Esophagus muscularis mucosa (tissue), 4 donors: ENCODE measurements at regions of chr17 and their contacts with region 1.

Region 1: GRCh38 chr17:64975329-64976087 is 56.2 kb upstream of the LRRC37A3 start:
- DNase-seq: peak; percentile 99
- H3K4me3 ChIP-seq: peak overlapping the region; percentile 64 to 94 (median 87)
- H3K27ac ChIP-seq: peak overlapping the region; percentile 91 to 99 (median 98)
- H3K4me1 ChIP-seq: peaks cover 23 to 28% (median 27%) of the 10 kb centered on the region in 4 donors
- H3K27me3 ChIP-seq: peaks cover 0 to 4% (median 0%) of the 10 kb centered on the region in 4 donors
- CTCF ChIP-seq: peak in 1 of 3 experiments; percentile 4
- EP300 ChIP-seq: no peak
- POLR2A ChIP-seq: peak; percentile 70

Region 2: GRCh38 chr17:65017207-65017774 is 41.8 kb after region 1 on chr17:
- intact Hi-C with region 1: loop called (anchors 5 kb)
- DNase-seq: no peak
- H3K4me3 ChIP-seq: peak overlapping the region in 1 of 4 donors; percentile 7
- H3K27ac ChIP-seq: peak overlapping the region; percentile 71 to 75 (median 73)
- H3K4me1 ChIP-seq: peaks cover 31 to 96% (median 92%) of the 10 kb centered on the region in 4 donors
- H3K27me3 ChIP-seq: no peaks in the 10 kb centered on the region
- CTCF ChIP-seq: no peak
- EP300 ChIP-seq: no peak
- POLR2A ChIP-seq: no peak

Region 3: DNA sequence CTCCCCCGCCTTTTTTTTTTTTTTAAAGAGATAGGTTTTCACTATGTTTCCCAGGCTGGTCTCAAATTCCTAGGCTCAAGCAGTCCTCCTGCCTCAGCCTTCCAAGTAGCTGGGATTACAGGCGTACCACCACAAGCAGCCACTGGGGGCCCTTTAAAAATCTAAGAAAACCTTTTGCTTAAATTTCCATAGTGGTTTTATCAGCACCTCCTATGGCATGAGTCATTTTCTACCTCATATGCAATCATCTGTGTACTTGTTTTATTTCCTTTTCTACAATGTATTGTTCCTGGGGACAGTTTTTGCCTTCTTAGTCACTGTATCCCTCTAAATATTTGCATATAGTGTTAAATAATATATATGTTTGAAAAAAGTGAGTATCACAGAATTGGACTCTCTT is 51.8 kb after region 1 on chr17:
- intact Hi-C with region 1: no loop called
- DNase-seq: no peak
- H3K4me3 ChIP-seq: no peak overlapping the region
- H3K27ac ChIP-seq: no peak overlapping the region
- H3K4me1 ChIP-seq: peaks cover 31 to 92% (median 87%) of the 10 kb centered on the region in 4 donors
- H3K27me3 ChIP-seq: no peaks in the 10 kb centered on the region
- CTCF ChIP-seq: peak in 1 of 3 experiments; percentile 26
- EP300 ChIP-seq: no peak
- POLR2A ChIP-seq: no peak

Region 4: GRCh38 chr17:65055348-65056261 is 80.1 kb after region 1 on chr17:
- intact Hi-C with region 1: loop called (anchors 5 kb)
- DNase-seq: no peak
- H3K4me3 ChIP-seq: peak overlapping the region; percentile 91 to 95 (median 93)
- H3K27ac ChIP-seq: peak overlapping the region; percentile 97 to 100 (median 99)
- H3K4me1 ChIP-seq: peaks cover 32 to 66% (median 59%) of the 10 kb centered on the region in 4 donors
- H3K27me3 ChIP-seq: no peaks in the 10 kb centered on the region
- CTCF ChIP-seq: no peak
- EP300 ChIP-seq: no peak
- POLR2A ChIP-seq: peak; percentile 55

Region 5: DNA sequence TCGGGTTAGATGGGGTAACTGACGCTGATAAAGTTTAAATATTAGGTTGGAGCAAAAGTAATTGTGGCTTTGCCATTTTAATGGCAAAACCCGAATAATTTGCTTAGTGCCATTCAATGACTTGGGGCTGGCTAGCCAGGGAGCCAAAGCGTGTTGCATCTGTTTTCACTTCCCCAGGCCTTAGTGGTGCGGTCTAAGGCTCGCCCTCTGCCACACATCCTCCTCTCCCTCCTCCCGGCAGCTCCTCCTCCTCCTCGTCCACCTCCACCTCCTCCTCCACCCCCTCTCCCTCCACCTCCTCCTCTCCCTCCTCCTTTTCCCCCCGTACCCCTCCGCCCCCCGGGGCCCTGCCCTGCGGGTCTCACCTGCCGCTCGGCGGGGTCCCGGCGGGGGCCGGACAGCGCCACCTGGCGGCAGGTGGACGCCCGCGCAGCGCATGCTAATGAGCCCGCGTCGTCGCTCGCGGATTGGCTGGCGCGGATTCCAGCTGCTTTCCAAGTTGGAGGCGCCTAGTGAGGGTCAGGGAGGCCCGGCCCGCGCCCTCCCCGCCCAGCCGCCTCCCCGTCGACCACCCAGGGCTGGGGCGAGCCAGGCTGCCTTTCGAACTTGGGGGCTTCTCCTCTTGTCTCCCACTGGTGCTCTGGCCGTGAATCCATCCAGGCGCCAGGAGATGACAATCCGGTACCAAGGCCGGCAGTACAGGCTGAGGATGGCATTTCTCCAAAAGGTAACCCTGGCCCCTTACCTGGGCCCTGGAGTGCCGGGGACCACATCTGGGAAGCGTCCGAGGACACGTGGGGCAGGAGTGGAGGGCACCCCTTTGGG is 125.0 kb after region 1 on chr17:
- intact Hi-C with region 1: loop called (anchors 5 kb)
- DNase-seq: peak; percentile 93
- H3K4me3 ChIP-seq: peak overlapping the region; percentile 59 to 68 (median 65)
- H3K27ac ChIP-seq: peak overlapping the region; percentile 81 to 84 (median 82)
- H3K4me1 ChIP-seq: peaks cover 13 to 42% (median 38%) of the 10 kb centered on the region in 4 donors
- H3K27me3 ChIP-seq: no peaks in the 10 kb centered on the region
- CTCF ChIP-seq: peak in 2 of 3 experiments; percentile 96
- EP300 ChIP-seq: no peak
- POLR2A ChIP-seq: no peak